Mammary epithelial cell (primary cell): ENCODE measurements at regions of chr12 and their contacts with region 1.

Region 1: GRCh38 chr12:67943226-67943892 is 45.9 kb upstream of the IFNG-AS1 start:
- DNase-seq: peak; percentile 58
- H3K4me3 ChIP-seq: no peak overlapping the region
- H3K27ac ChIP-seq: no peak overlapping the region
- H3K4me1 ChIP-seq: peaks cover 6% of the 10 kb centered on the region
- H3K27me3 ChIP-seq: no peaks in the 10 kb centered on the region
- CTCF ChIP-seq: peak; percentile 61 to 69

Region 2: DNA sequence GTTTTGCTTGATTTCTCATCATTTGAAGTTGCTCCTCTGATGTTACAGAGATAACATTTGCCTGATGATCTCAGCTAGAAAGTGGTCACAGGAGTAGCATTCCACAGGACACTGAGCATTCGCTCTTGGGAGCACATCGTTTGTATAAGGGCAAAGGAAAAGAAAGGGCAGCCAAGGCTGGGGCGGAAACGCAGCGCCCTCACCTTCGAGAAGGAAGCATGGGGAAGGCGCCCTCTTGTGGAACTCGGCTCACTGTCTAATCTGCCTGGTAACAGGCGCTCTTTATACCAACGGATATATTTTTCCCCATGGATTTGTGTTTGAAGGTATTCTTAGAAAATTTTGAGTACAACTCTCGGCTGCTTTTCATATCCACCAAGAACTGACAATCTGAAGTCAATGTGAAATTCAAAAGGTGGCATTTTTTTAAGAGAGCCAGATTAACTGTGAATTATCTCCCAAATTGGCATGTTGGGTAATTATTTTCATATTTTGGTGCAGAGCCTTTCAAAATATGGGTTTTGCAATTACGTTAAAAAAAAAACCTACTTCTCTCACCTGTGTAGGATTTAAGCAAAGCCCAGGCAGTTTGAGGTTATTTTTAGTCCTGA is 501.5 kb before region 1 on chr12:
- CTCF ChIA-PET with region 1: interaction called, 7 read pairs
- dilution Hi-C with region 1: no loop called
- in situ Hi-C with region 1: loop called in 1 of 2 experiments (anchors 5 kb)
- intact Hi-C with region 1: loop called (anchors 1 kb)
- DNase-seq: peak; percentile 57
- H3K4me3 ChIP-seq: no peak overlapping the region
- H3K27ac ChIP-seq: no peak overlapping the region
- H3K4me1 ChIP-seq: no peaks in the 10 kb centered on the region
- H3K27me3 ChIP-seq: no peaks in the 10 kb centered on the region
- CTCF ChIP-seq: peak; percentile 73 to 89

Region 3: DNA sequence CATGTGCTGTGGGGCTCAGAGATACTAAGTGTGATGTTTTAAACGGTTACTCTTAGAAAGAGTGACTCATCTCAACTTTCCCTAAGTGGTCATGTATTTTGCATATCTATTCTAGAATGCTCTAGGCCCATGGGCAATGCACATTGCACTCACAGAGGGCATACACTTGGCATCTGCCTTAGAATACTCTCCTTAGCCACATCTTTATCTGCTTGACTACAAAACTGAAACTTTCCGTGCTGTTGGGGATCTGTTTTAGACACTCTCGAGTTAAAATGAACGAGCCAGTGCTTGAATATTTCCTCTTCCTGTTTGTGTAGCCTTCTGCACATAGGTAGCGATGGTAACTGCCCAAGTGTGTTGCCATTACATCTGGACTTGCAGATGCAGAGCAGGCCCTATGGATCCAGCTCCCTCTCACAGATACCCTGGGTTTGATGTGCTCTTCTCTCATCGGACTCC is 493.7 kb before region 1 on chr12:
- CTCF ChIA-PET with region 1: no interaction called
- dilution Hi-C with region 1: no loop called
- in situ Hi-C with region 1: loop called in 1 of 2 experiments (anchors 5 kb)
- intact Hi-C with region 1: no loop called
- DNase-seq: no peak
- H3K4me3 ChIP-seq: no peak overlapping the region
- H3K27ac ChIP-seq: no peak overlapping the region
- H3K4me1 ChIP-seq: no peaks in the 10 kb centered on the region
- H3K27me3 ChIP-seq: no peaks in the 10 kb centered on the region
- CTCF ChIP-seq: no peak

Region 4: GRCh38 chr12:67633708-67634107 is 309.7 kb before region 1 on chr12:
- CTCF ChIA-PET with region 1: no interaction called
- dilution Hi-C with region 1: no loop called
- in situ Hi-C with region 1: no loop called
- intact Hi-C with region 1: no loop called
- DNase-seq: no peak
- H3K4me3 ChIP-seq: no peak overlapping the region
- H3K27ac ChIP-seq: no peak overlapping the region
- H3K4me1 ChIP-seq: no peaks in the 10 kb centered on the region
- H3K27me3 ChIP-seq: no peaks in the 10 kb centered on the region
- CTCF ChIP-seq: no peak

Region 5: DNA sequence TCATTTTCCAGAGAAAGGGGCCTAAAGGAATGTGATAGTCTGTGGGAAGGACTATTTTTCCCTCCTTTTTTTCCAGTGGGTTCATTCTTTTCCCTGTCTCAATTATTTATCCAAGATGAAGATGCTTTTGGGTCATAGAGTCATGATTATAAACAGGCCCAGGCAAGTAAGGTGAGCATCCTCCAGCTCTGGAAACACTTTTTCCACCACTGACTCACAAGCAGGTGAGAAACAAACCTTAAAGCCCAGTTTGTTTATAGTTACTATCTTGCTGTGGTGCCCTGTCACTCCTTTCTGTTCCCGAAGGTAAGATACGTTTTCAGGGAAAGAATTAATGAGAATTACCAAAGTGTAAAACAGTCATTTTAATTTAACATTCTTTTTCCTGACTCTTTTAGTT is 61.8 kb before region 1 on chr12:
- CTCF ChIA-PET with region 1: no interaction called
- dilution Hi-C with region 1: no loop called
- in situ Hi-C with region 1: no loop called
- intact Hi-C with region 1: loop called (anchors 1 kb)
- DNase-seq: peak; percentile 81
- H3K4me3 ChIP-seq: no peak overlapping the region
- H3K27ac ChIP-seq: peak overlapping the region; percentile 82
- H3K4me1 ChIP-seq: peaks cover 8% of the 10 kb centered on the region
- H3K27me3 ChIP-seq: no peaks in the 10 kb centered on the region
- CTCF ChIP-seq: no peak